ENCODE measurements at regions of chr1 and their contacts with region 1.

Region 1: DNA sequence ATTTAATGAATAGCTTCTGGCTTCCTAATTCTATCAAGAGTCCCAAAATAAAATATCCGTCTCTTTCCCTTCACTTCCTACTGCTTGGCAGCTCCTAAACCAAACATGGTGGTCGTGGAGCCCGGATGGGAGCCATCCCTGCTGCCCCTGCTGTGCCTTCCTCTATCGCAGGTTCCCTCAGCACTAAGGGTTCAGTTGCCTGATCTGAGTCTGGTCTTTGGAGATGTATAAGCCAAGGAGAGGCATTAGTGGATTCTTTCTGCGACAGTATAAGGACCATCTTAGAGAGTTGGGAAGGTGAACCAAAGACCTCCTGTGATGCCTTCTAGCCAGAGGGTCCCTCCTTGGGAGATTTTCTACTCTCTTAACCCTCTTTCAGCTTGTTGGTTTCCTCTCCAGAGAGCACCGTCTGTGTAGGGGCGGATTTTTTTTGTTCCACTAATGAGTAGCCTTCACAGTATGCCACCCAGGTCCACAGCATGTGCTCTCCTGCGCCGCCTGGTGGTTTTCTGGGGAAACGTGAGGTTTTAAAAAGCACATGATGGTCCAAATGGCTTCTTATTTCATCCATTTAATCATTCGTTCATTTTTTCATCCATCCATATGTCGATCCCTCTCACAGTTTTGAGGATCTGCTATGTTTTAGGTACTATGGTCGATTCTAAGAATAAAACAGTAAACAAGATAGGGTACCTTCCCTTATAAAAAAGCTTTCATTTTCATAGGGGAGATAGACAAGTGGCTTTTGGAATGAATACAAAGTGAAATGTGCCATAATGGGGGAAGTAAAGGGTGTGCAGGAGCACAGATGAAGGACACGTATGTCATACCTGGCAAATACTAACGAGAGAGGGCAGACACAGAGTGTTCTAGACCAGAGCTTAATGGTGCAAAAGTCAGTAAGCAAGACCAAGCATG is 71.0 kb downstream of the NFASC start:
- DNase-seq: peak; percentile 71 to 85
- H3K4me3 ChIP-seq: no peak overlapping the region
- H3K27ac ChIP-seq: no peak overlapping the region
- H3K4me1 ChIP-seq: peaks cover 0 to 5% (median 0%) of the 10 kb centered on the region in 4 donors
- H3K27me3 ChIP-seq: no peaks in the 10 kb centered on the region
- CTCF ChIP-seq: peak in 5 of 7 experiments; percentile 63 to 88 (median 79)
- EP300 ChIP-seq: no peak
- POLR2A ChIP-seq: no peak

Region 2: GRCh38 chr1:204791453-204792353 is 150.0 kb before region 1 on chr1:
- intact Hi-C with region 1: no loop called
- DNase-seq: peak; percentile 78 to 81
- H3K4me3 ChIP-seq: no peak overlapping the region
- H3K27ac ChIP-seq: no peak overlapping the region
- H3K4me1 ChIP-seq: no peaks in the 10 kb centered on the region
- H3K27me3 ChIP-seq: peaks cover 0 to 56% (median 13%) of the 10 kb centered on the region in 3 donors
- CTCF ChIP-seq: peak in 4 of 7 experiments; percentile 43 to 65 (median 64)
- EP300 ChIP-seq: no peak
- POLR2A ChIP-seq: no peak

Region 3: GRCh38 chr1:204806943-204807687 is 134.6 kb before region 1 on chr1:
- intact Hi-C with region 1: loop called (anchors 10 kb)
- DNase-seq: peak; percentile 83 to 93
- H3K4me3 ChIP-seq: peak overlapping the region; percentile 36 to 50 (median 44)
- H3K27ac ChIP-seq: peak overlapping the region in 1 of 5 donors; percentile 23
- H3K4me1 ChIP-seq: peaks cover 6 to 14% (median 11%) of the 10 kb centered on the region in 4 donors
- H3K27me3 ChIP-seq: peaks cover 0 to under 1% (median 0%) of the 10 kb centered on the region in 3 donors
- CTCF ChIP-seq: peak in 5 of 7 experiments; percentile 92 to 99 (median 97)
- EP300 ChIP-seq: no peak
- POLR2A ChIP-seq: no peak